ENCODE measurements at regions of chr3 and their contacts with region 1.

Region 1: DNA sequence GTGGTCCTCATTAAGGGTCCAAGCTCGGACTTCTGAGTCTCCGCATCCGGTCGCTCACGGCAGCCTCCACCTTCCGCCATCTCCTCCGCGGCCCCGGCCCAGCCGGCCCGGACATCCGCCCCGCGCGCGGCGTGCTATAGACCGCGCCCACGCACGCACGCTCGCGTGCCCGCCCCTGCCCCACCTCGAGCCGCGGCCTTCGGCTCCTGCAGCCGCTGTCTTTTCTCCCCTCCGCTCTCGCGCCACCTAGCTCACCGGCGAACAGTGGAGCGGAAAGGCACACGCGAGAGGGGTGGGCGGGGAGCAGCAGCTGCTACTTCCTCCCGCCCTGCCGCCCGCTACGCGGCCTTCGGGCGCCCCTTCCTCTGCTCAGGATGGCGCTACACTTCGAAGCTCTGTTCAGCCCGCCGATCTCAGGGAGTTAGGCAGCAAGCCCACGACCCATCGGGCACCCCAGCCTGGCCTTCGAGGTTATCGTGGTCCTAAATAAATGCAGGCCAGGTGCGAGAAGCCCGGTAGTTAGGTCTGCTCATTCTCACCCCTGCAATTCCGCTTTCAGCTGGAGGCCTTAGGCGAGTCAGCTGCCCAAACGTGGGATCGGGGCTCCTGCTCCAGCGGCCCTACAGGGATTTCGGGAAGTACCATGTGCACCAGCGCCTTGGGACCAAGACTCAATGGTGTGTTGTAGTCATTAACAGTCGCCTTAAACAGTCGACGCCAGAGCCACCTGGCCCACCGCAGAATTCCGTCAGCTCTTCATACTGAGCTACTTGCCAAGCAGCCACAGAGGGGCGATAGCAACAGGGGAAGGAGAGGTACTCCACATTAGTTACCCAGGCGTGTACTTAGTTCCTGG is at the start of gene USP4:
- DNase-seq: peak; percentile 89
- H3K4me3 Mint-ChIP-seq: peak within 1 kb of the TSS; percentile 96
- H3K27ac Mint-ChIP-seq: peak within 1 kb of the TSS; percentile 87
- H3K4me1 Mint-ChIP-seq: peaks cover 19% of the 10 kb centered on the region
- H3K27me3 Mint-ChIP-seq: no peaks in the 10 kb centered on the region
- CTCF ChIP-seq: peak; percentile 26
- total RNA-seq, gene USP4: 52.6 and 54.1 TPM in 2 replicates

Region 2: GRCh38 chr3:49120438-49121131 is 219.6 kb before region 1 on chr3 and contains the start of gene USP19:
- CTCF ChIA-PET with region 1: interaction called, 3 read pairs
- POLR2A ChIA-PET with region 1: interaction called, 12 read pairs
- intact Hi-C with region 1: no loop called
- DNase-seq: peak; percentile 92
- H3K4me3 Mint-ChIP-seq: peak within 1 kb of the TSS; percentile 75
- H3K27ac Mint-ChIP-seq: peak within 1 kb of the TSS; percentile 79
- H3K4me1 Mint-ChIP-seq: peaks cover 6% of the 10 kb centered on the region
- H3K27me3 Mint-ChIP-seq: no peaks in the 10 kb centered on the region
- CTCF ChIP-seq: no peak
- total RNA-seq, gene USP19: 39.3 and 51.4 TPM in 2 replicates

Region 3: DNA sequence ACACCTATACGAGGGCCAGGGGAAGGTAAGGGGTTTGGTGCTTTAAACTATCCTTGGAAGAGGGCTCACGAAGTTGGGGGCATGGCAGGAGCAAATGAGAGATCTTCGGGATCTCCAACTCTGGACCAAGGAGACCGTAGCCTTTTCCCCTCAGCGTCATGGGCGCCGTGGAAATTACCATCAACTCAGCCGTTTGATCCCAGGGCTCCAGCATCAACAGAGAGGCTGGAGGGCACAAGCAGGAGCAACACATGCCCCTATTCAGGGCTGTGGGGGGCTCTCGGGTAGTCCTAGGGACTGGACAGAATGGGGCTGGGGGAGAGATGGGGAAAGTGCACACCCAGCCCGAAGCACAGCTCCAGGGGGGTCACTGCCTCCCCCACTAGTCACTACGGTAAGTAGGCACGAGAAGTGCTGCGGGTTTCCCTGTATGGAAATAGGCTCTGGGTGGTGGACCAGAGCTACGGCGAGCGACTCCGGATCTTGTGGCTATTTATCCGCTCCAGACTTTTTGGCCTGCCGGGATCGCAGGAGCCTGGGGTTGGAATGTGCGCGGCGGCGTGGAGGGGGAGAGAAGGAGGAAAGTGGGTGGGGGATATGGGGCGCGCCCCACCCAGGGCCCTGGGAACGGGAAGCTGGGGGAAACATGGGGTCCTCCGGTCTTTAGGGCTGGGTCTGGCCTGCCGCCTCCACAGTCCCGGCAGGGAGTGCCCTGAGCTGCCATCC is 206.8 kb before region 1 on chr3:
- CTCF ChIA-PET with region 1: interaction called, 4 read pairs
- POLR2A ChIA-PET with region 1: interaction called, 12 read pairs
- intact Hi-C with region 1: no loop called
- DNase-seq: peak; percentile 87
- H3K4me3 Mint-ChIP-seq: peak overlapping the region; percentile 90
- H3K27ac Mint-ChIP-seq: peak overlapping the region; percentile 84
- H3K4me1 Mint-ChIP-seq: peaks cover 16% of the 10 kb centered on the region
- H3K27me3 Mint-ChIP-seq: no peaks in the 10 kb centered on the region
- CTCF ChIP-seq: no peak

Region 4: DNA sequence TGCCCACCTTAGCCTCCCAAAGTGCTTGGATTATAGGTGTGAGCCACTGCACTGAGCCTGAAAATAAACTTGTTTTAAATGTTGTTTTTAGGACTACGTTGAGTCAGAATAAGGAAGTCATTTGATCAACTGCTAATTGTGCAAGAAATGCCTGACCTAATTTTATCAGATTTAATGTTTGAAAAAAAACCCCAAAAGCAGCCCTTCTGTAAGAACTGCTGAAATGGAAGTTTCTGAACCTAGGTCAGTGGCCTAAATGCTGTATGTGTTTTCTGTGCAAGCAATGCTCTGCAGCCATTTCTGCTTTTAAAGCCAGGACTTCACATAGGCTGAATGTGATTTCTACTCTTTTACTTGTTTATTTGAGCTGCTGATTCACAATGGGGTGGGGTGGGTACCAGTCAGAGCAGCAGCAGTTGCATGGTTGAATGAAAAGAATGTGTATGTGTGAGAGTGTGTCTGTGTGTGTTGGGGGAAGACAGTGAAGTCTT is 11.4 kb after region 1 on chr3:
- CTCF ChIA-PET with region 1: interaction called, 12 read pairs
- POLR2A ChIA-PET with region 1: interaction called, 42 read pairs
- intact Hi-C with region 1: no loop called
- DNase-seq: peak; percentile 76
- H3K4me3 Mint-ChIP-seq: peak overlapping the region; percentile 45
- H3K27ac Mint-ChIP-seq: peak overlapping the region; percentile 82
- H3K4me1 Mint-ChIP-seq: peaks cover 40% of the 10 kb centered on the region
- H3K27me3 Mint-ChIP-seq: no peaks in the 10 kb centered on the region
- CTCF ChIP-seq: no peak

Region 5: GRCh38 chr3:49358217-49358883 is 18.2 kb after region 1 on chr3 and contains the start of gene GPX1:
- CTCF ChIA-PET with region 1: interaction called, 5 read pairs
- POLR2A ChIA-PET with region 1: interaction called, 74 read pairs
- intact Hi-C with region 1: loop called (anchors 2 kb)
- DNase-seq: peak; percentile 98
- H3K4me3 Mint-ChIP-seq: peak within 1 kb of the TSS; percentile 95
- H3K27ac Mint-ChIP-seq: peak within 1 kb of the TSS; percentile 78
- H3K4me1 Mint-ChIP-seq: peaks cover 14% of the 10 kb centered on the region
- H3K27me3 Mint-ChIP-seq: no peaks in the 10 kb centered on the region
- CTCF ChIP-seq: no peak
- total RNA-seq, gene GPX1: 576 and 589 TPM in 2 replicates

Region 6: GRCh38 chr3:49422379-49423248 is 82.4 kb after region 1 on chr3 and contains the start of gene AMT:
- CTCF ChIA-PET with region 1: no interaction called
- POLR2A ChIA-PET with region 1: no interaction called
- intact Hi-C with region 1: no loop called
- DNase-seq: no peak
- H3K4me3 Mint-ChIP-seq: no peak within 1 kb of the TSS
- H3K27ac Mint-ChIP-seq: no peak within 1 kb of the TSS
- H3K4me1 Mint-ChIP-seq: peaks cover 17% of the 10 kb centered on the region
- H3K27me3 Mint-ChIP-seq: no peaks in the 10 kb centered on the region
- CTCF ChIP-seq: no peak
- total RNA-seq, gene AMT: 3.7 and 4.9 TPM in 2 replicates

Region 7: GRCh38 chr3:49445381-49445780 is 105.2 kb after region 1 on chr3:
- CTCF ChIA-PET with region 1: interaction called, 7 read pairs
- POLR2A ChIA-PET with region 1: interaction called, 14 read pairs
- intact Hi-C with region 1: loop called (anchors 1 kb)
- DNase-seq: no peak
- H3K4me3 Mint-ChIP-seq: no peak overlapping the region
- H3K27ac Mint-ChIP-seq: no peak overlapping the region
- H3K4me1 Mint-ChIP-seq: peaks cover 7% of the 10 kb centered on the region
- H3K27me3 Mint-ChIP-seq: no peaks in the 10 kb centered on the region
- CTCF ChIP-seq: no peak

Region 8: GRCh38 chr3:49469936-49470713 is 130.0 kb after region 1 on chr3 and contains the start of gene DAG1:
- CTCF ChIA-PET with region 1: interaction called, 3 read pairs
- POLR2A ChIA-PET with region 1: interaction called, 17 read pairs
- intact Hi-C with region 1: no loop called
- DNase-seq: peak; percentile 96
- H3K4me3 Mint-ChIP-seq: peak within 1 kb of the TSS; percentile 89
- H3K27ac Mint-ChIP-seq: peak within 1 kb of the TSS; percentile 88
- H3K4me1 Mint-ChIP-seq: peaks cover 19% of the 10 kb centered on the region
- H3K27me3 Mint-ChIP-seq: no peaks in the 10 kb centered on the region
- CTCF ChIP-seq: no peak
- total RNA-seq, gene DAG1: 40.3 and 49.9 TPM in 2 replicates

Region 9: GRCh38 chr3:49656541-49657112 is 316.5 kb after region 1 on chr3:
- CTCF ChIA-PET with region 1: no interaction called
- POLR2A ChIA-PET with region 1: no interaction called
- intact Hi-C with region 1: no loop called
- DNase-seq: no peak
- H3K4me3 Mint-ChIP-seq: no peak overlapping the region
- H3K27ac Mint-ChIP-seq: no peak overlapping the region
- H3K4me1 Mint-ChIP-seq: peaks cover 6% of the 10 kb centered on the region
- H3K27me3 Mint-ChIP-seq: no peaks in the 10 kb centered on the region
- CTCF ChIP-seq: no peak

Measured in MCF 10A (cell line).